ENCODE measurements at regions of chr5 and their contacts with region 1.

Region 1: DNA sequence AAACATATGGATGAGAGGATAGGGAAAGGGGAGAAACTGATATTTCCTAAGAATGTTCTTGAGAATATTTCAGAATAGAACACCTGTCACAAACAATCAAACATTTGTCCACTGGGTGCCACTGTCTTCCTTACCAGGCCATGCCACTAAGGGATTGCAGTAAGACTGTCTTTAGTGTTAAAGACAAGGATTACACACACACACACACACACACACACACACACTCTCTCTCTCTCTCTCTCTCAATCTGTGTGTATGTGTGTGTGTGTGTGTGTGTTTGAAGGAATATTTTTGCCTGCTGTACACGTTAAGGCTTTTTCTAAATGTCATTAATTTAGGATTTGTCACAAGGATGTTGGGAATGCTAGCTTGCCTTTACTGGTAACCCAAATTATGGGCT is 54.4 kb downstream of the CCDC192 start:
- DNase-seq: peak; percentile 74
- H3K4me3 Mint-ChIP-seq: no peak overlapping the region
- H3K27ac Mint-ChIP-seq: no peak overlapping the region
- H3K4me1 Mint-ChIP-seq: no peaks in the 10 kb centered on the region
- H3K27me3 Mint-ChIP-seq: no peaks in the 10 kb centered on the region
- CTCF ChIP-seq: peak; percentile 64

Region 2: GRCh38 chr5:127410959-127411358 is 346.6 kb before region 1 on chr5:
- CTCF ChIA-PET with region 1: no interaction called
- POLR2A ChIA-PET with region 1: no interaction called
- intact Hi-C with region 1: no loop called
- DNase-seq: no peak
- H3K4me3 Mint-ChIP-seq: no peak overlapping the region
- H3K27ac Mint-ChIP-seq: no peak overlapping the region
- H3K4me1 Mint-ChIP-seq: no peaks in the 10 kb centered on the region
- H3K27me3 Mint-ChIP-seq: no peaks in the 10 kb centered on the region
- CTCF ChIP-seq: no peak

Region 3: DNA sequence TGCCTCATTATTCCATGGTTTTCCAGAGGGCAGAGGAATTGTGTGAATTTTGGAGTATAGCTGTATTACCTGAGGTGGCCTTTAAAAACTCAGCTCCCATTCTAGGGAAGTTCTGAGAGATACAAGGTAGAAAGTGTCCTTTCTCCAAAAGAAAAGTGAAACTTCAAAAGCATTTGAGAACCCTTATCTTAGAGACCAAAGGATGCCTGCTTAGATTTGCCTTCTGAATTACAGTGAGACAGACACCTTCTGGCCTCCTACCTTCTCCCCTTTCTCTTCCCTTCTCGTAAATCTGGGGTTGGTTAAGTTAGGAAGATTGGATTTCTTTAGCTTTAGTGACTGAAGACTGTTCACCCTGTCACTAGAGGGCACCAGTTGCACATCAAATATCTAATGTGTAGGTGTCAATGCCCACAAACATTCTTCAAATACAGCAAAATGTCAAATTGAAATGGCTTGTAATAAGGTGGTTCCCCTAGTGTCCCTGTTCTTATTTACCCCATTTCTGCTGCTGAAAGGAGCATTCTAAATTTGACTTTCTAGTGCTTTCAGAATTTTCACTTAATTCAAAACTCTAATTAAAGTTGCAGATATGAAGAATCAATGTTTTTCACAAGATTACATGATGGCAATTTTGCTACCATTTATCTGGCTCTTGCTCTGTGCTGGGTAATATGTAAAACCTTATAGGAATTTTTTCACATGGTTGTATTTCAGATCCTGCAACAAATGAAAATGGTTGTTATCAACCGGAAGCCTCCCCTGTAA is 193.4 kb before region 1 on chr5:
- CTCF ChIA-PET with region 1: interaction called, 14 read pairs
- POLR2A ChIA-PET with region 1: interaction called, 8 read pairs
- intact Hi-C with region 1: loop called (anchors 1 kb)
- DNase-seq: peak; percentile 89
- H3K4me3 Mint-ChIP-seq: no peak overlapping the region
- H3K27ac Mint-ChIP-seq: no peak overlapping the region
- H3K4me1 Mint-ChIP-seq: peaks cover 5% of the 10 kb centered on the region
- H3K27me3 Mint-ChIP-seq: peaks cover 10% of the 10 kb centered on the region
- CTCF ChIP-seq: peak; percentile 77

Region 4: GRCh38 chr5:127572930-127573329 is 184.6 kb before region 1 on chr5:
- CTCF ChIA-PET with region 1: interaction called, 36 read pairs
- POLR2A ChIA-PET with region 1: no interaction called
- intact Hi-C with region 1: no loop called
- DNase-seq: peak; percentile 35
- H3K4me3 Mint-ChIP-seq: no peak overlapping the region
- H3K27ac Mint-ChIP-seq: no peak overlapping the region
- H3K4me1 Mint-ChIP-seq: peaks cover 11% of the 10 kb centered on the region
- H3K27me3 Mint-ChIP-seq: peaks cover 6% of the 10 kb centered on the region
- CTCF ChIP-seq: peak; percentile 32

Region 5: DNA sequence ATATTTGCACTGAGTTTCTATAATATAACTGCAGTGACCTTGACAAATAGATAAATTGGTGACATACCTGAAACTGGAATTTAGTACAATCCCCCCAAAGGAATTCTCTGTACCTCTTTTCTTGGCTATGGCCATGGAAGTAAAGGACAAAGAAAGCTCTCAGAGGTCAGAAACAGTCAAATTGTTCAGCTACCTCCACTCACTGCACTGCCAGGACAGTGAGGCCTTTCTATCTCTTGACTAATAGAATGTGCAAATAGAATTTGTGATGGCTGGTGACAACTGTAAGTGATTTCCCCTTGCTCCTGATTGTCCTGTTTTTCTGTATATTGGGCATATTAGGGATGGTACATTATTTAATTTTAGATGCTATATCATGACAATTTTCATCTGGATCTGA is 12.7 kb after region 1 on chr5:
- CTCF ChIA-PET with region 1: interaction called, 11 read pairs
- POLR2A ChIA-PET with region 1: interaction called, 4 read pairs
- intact Hi-C with region 1: no loop called
- DNase-seq: no peak
- H3K4me3 Mint-ChIP-seq: no peak overlapping the region
- H3K27ac Mint-ChIP-seq: no peak overlapping the region
- H3K4me1 Mint-ChIP-seq: no peaks in the 10 kb centered on the region
- H3K27me3 Mint-ChIP-seq: peaks cover 25% of the 10 kb centered on the region
- CTCF ChIP-seq: no peak

Region 6: DNA sequence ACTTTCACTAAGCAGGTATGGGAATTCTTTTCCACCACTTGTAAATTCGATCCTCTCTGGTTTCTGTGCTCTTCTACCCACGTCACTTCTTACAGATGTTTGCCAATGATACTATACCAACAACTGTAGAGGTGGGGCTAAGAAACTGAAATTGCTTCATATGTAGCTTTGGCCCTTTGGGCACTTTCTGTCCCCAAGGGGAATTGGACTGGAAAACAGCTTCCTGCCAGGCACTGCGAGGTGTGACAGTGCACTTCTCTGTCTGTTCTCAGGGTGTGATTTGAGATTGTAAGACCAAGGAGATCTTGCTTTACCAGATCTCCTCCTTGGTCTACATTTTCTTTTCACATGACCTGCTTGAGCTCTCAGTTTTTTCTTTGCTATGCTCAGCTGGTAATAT is 109.8 kb after region 1 on chr5:
- CTCF ChIA-PET with region 1: interaction called, 15 read pairs
- POLR2A ChIA-PET with region 1: interaction called, 3 read pairs
- intact Hi-C with region 1: no loop called
- DNase-seq: peak; percentile 51
- H3K4me3 Mint-ChIP-seq: no peak overlapping the region
- H3K27ac Mint-ChIP-seq: no peak overlapping the region
- H3K4me1 Mint-ChIP-seq: peaks cover 21% of the 10 kb centered on the region
- H3K27me3 Mint-ChIP-seq: no peaks in the 10 kb centered on the region
- CTCF ChIP-seq: no peak

Region 7: GRCh38 chr5:127909078-127909477 is 151.5 kb after region 1 on chr5:
- CTCF ChIA-PET with region 1: interaction called, 10 read pairs
- POLR2A ChIA-PET with region 1: interaction called, 3 read pairs
- intact Hi-C with region 1: no loop called
- DNase-seq: peak; percentile 84
- H3K4me3 Mint-ChIP-seq: no peak overlapping the region
- H3K27ac Mint-ChIP-seq: no peak overlapping the region
- H3K4me1 Mint-ChIP-seq: no peaks in the 10 kb centered on the region
- H3K27me3 Mint-ChIP-seq: no peaks in the 10 kb centered on the region
- CTCF ChIP-seq: peak; percentile 60

Region 8: DNA sequence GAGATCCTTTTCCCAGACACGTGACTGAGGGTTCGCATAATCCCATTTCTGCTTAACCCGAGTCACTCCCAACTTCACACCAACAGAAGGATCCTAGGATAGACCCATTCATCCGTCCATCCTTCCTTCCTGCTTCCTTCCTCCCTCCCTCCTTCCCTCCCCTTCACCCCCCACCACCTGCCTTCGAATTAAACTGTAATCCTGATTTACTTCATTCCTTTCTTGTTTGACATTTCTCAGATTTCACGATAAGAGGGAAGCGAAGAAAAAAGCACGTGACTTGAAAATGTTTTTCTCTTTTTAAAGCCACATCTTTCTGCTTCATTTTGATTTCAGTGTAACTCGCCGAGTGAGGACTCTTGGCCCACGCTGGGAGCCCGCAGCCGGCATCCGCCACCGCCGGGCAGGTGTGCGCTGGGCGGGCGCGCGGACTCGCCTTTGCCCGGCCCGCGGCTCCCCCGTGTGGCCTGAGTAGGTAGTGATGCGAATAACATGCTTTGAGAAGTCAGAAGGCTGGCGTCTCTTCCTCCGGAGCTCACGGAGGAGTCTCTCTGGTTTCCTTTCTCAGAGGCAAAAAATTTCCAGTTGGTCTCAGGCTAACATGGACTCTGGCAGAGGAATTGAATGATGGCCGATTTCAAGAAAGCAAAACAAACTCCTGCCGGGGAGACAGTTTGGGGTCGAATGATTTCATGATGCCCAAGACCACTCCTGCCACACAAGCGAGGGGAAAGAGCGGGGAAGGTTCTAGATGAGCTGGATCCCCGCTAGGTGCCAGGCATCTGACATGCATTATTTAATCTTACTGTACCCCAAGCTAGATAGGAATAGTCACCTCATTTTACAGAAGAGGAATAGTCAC is 443.7 kb after region 1 on chr5:
- CTCF ChIA-PET with region 1: interaction called, 70 read pairs
- POLR2A ChIA-PET with region 1: interaction called, 5 read pairs
- intact Hi-C with region 1: loop called (anchors 1 kb)
- DNase-seq: peak; percentile 81
- H3K4me3 Mint-ChIP-seq: peak overlapping the region; percentile 42
- H3K27ac Mint-ChIP-seq: no peak overlapping the region
- H3K4me1 Mint-ChIP-seq: peaks cover 21% of the 10 kb centered on the region
- H3K27me3 Mint-ChIP-seq: no peaks in the 10 kb centered on the region
- CTCF ChIP-seq: peak; percentile 95

Measured in MCF 10A (cell line).